ENCODE measurements at regions of chr1 and their contacts with region 1.

Region 1: GRCh38 chr1:198157241-198157846 is 546 bp downstream of the NEK7 start:
- DNase-seq: peak; percentile 93
- H3K4me3 ChIP-seq: peak overlapping the region; percentile 82 to 95 (median 91)
- H3K27ac ChIP-seq: peak overlapping the region; percentile 45
- H3K4me1 ChIP-seq: peaks cover 59% of the 10 kb centered on the region
- H3K27me3 ChIP-seq: no peaks in the 10 kb centered on the region
- CTCF ChIP-seq: no peak
- POLR2A ChIP-seq: no peak

Region 2: DNA sequence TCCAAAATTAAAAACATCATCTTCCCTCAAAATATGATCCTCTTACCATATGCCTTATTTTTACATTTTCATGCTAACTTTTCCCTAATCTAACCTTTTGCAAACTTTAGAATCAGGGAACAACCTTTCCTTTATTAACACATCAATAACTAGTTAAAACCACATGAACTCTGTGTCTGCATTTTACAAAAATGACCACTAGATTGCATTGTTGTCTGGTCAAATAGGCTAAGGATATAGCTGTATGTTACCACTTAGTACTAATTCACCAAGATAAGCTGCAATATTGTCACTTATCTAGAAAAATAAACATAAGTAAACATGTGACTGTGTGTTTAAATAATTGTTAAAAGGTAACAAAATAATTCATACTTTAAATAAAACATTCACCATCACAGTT is 464.4 kb before region 1 on chr1:
- CTCF ChIA-PET with region 1: no interaction called
- POLR2A ChIA-PET with region 1: no interaction called
- dilution Hi-C with region 1: no loop called
- intact Hi-C with region 1: loop called (anchors 10 kb)
- DNase-seq: peak; percentile 23
- H3K4me3 ChIP-seq: no peak overlapping the region
- H3K27ac ChIP-seq: no peak overlapping the region
- H3K4me1 ChIP-seq: peaks cover 6% of the 10 kb centered on the region
- H3K27me3 ChIP-seq: no peaks in the 10 kb centered on the region
- CTCF ChIP-seq: no peak
- POLR2A ChIP-seq: no peak

Region 3: GRCh38 chr1:198072177-198072576 is 85.2 kb before region 1 on chr1:
- CTCF ChIA-PET with region 1: interaction called, 28 read pairs
- POLR2A ChIA-PET with region 1: no interaction called
- dilution Hi-C with region 1: no loop called
- intact Hi-C with region 1: no loop called
- DNase-seq: peak; percentile 37
- H3K4me3 ChIP-seq: no peak overlapping the region
- H3K27ac ChIP-seq: no peak overlapping the region
- H3K4me1 ChIP-seq: no peaks in the 10 kb centered on the region
- H3K27me3 ChIP-seq: no peaks in the 10 kb centered on the region
- CTCF ChIP-seq: peak; percentile 4 to 26
- POLR2A ChIP-seq: no peak

Region 4: DNA sequence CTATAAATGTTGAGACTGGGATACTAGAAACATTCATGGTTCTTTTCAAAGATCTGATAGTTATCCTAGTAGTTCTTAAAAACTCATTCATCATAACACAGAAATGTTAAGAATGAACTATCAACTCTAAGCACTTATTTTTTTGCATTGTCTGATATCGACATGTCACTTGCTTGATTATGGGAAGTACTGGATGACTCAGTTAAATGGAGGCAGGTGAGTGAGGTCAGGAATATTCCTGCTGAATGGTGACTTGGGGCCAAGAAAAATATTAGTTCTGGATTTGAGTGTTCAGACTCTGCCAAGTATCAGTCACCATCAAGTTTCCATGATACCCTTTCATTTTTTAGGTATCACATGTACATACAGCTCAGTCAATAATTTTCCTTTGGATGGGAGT is 63.1 kb after region 1 on chr1:
- CTCF ChIA-PET with region 1: interaction called, 3 read pairs
- POLR2A ChIA-PET with region 1: no interaction called
- dilution Hi-C with region 1: no loop called
- intact Hi-C with region 1: loop called (anchors 1 kb)
- DNase-seq: peak; percentile 98
- H3K4me3 ChIP-seq: no peak overlapping the region
- H3K27ac ChIP-seq: peak overlapping the region; percentile 75
- H3K4me1 ChIP-seq: peaks cover 15% of the 10 kb centered on the region
- H3K27me3 ChIP-seq: no peaks in the 10 kb centered on the region
- CTCF ChIP-seq: no peak
- POLR2A ChIP-seq: peak; percentile 60

Region 5: GRCh38 chr1:198443374-198444233 is 286.3 kb after region 1 on chr1:
- CTCF ChIA-PET with region 1: interaction called, 3 read pairs
- POLR2A ChIA-PET with region 1: no interaction called
- dilution Hi-C with region 1: no loop called
- intact Hi-C with region 1: loop called (anchors 2 kb)
- DNase-seq: peak; percentile 92
- H3K4me3 ChIP-seq: no peak overlapping the region
- H3K27ac ChIP-seq: peak overlapping the region; percentile 76
- H3K4me1 ChIP-seq: peaks cover 37% of the 10 kb centered on the region
- H3K27me3 ChIP-seq: no peaks in the 10 kb centered on the region
- CTCF ChIP-seq: no peak
- POLR2A ChIP-seq: peak; percentile 25

Region 6: GRCh38 chr1:198490224-198490623 is 332.9 kb after region 1 on chr1:
- CTCF ChIA-PET with region 1: no interaction called
- POLR2A ChIA-PET with region 1: no interaction called
- dilution Hi-C with region 1: no loop called
- intact Hi-C with region 1: no loop called
- DNase-seq: no peak
- H3K4me3 ChIP-seq: no peak overlapping the region
- H3K27ac ChIP-seq: no peak overlapping the region
- H3K4me1 ChIP-seq: peaks cover 16% of the 10 kb centered on the region
- H3K27me3 ChIP-seq: no peaks in the 10 kb centered on the region
- CTCF ChIP-seq: no peak
- POLR2A ChIP-seq: no peak

Region 7: DNA sequence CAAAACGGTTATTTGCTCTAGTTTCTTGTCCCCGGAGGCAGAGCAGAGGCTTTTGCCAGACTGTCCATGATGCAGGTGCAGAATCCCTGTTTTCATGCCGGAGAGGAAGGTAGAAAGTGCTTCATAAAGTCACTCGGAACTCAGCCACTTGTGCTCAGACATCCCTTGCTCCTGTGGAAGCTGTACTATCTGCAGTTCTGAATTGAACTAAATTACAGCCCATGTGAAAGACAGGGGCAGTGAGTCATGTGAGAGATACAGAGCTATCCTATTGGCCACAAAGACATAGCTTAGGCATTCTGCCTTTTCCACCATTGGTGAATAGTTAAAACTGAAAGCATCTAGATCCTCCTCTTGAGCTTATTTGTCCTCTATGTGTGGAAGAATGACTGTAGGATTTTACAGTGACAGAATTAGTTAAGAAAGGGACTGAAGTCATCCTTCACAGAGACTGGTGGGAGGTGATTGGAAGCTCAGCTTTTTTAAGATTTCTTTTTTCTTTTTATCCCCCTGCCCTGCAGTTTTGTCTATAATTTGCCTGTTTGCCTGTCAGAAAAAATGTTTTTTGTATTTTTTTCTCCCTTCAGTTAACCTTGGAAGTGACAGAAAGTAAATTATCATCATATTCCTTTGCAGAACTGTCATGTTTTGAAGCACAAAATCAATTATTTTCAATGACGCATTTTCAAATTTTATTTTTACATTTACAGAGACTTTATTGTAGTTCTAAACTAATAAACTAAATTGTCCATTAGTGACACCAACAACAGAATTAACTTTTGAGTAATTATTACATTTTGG is 780.1 kb after region 1 on chr1:
- CTCF ChIA-PET with region 1: no interaction called
- POLR2A ChIA-PET with region 1: no interaction called
- dilution Hi-C with region 1: no loop called
- intact Hi-C with region 1: loop called (anchors 10 kb)
- DNase-seq: peak; percentile 95
- H3K4me3 ChIP-seq: peak overlapping the region; percentile 63 to 99 (median 93)
- H3K27ac ChIP-seq: peak overlapping the region; percentile 95
- H3K4me1 ChIP-seq: peaks cover 17% of the 10 kb centered on the region
- H3K27me3 ChIP-seq: no peaks in the 10 kb centered on the region
- CTCF ChIP-seq: no peak
- POLR2A ChIP-seq: peak; percentile 96